Aorta (tissue), 5 donors: ENCODE measurements at regions of chr11 and their contacts with region 1.

Region 1: GRCh38 chr11:124086005-124086846 is 29.0 kb upstream of the VWA5A start:
- DNase-seq: no peak
- ATAC-seq: no peak
- H3K4me3 ChIP-seq: no peak overlapping the region
- H3K27ac ChIP-seq: no peak overlapping the region
- H3K4me1 ChIP-seq: no peaks in the 10 kb centered on the region
- H3K27me3 ChIP-seq: peaks cover 0 to 3% of the 10 kb centered on the region in 2 donors

Region 2: DNA sequence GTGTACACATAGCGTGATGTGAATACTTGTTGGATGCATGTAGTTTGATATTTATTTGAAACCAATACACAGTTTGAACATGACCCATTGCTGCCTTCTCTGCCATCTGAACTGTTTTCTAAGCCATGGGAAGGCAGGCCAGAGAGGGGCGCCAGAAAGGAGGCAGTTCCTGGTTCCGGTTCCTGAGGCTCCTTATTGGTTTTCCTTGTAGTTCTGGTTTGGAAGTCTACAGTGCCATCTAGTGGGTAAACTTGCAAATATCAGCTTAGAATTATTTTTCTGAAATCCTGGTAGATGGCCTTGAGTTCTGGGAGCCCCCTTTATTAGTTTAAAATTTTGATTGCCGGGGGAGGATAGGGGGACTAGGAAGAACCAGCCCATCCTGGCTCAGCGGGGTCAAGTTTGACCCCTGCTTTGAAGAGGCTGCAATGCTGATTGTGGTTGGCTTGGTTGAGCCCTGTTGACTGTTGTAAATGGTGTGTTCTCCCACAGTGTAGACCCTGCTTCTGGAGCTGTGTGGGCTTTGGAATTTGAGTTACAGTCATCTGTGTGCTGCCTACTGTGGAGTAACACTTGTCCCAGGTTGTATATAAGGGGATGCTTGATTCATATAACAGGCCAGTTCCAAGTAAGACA is 607.8 kb before region 1 on chr11:
- intact Hi-C with region 1: no loop called
- DNase-seq: peak in 1 of 2 donors; percentile 62
- ATAC-seq: peak; percentile 75
- H3K4me3 ChIP-seq: no peak overlapping the region
- H3K27ac ChIP-seq: no peak overlapping the region
- H3K4me1 ChIP-seq: no peaks in the 10 kb centered on the region
- H3K27me3 ChIP-seq: no peaks in the 10 kb centered on the region

Region 3: GRCh38 chr11:124219126-124219525 is 132.9 kb after region 1 on chr11:
- intact Hi-C with region 1: no loop called
- DNase-seq: no peak
- ATAC-seq: no peak
- H3K4me3 ChIP-seq: no peak overlapping the region
- H3K27ac ChIP-seq: no peak overlapping the region
- H3K4me1 ChIP-seq: no peaks in the 10 kb centered on the region
- H3K27me3 ChIP-seq: no peaks in the 10 kb centered on the region

Region 4: GRCh38 chr11:124329787-124330478 is 243.7 kb after region 1 on chr11:
- intact Hi-C with region 1: loop called in 1 of 2 experiments (anchors 10 kb)
- DNase-seq: no peak
- ATAC-seq: no peak
- H3K4me3 ChIP-seq: no peak overlapping the region
- H3K27ac ChIP-seq: no peak overlapping the region
- H3K4me1 ChIP-seq: no peaks in the 10 kb centered on the region
- H3K27me3 ChIP-seq: no peaks in the 10 kb centered on the region

Region 5: DNA sequence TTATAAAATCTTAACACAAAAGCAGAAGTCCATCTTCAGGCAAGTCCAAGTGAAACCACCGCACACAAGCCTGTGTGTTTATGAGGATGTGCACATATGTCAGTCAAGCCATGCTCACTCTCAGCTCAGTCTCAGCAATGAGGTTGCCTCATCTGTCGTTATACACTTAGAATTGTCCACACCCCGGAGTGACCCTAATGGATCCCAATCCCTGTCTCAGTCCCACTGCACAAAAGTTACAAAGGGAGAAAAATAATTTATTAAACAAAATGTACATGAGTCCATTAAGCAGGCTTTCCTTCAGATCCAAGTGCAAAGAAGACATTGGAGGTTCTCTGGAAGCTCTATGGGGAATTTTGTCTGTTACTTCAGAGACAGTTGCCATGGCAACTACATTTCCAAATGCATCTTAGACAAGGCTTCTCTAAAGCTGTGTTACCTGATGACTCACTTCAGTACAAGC is 432.8 kb after region 1 on chr11:
- intact Hi-C with region 1: no loop called
- DNase-seq: peak in 1 of 2 donors; percentile 42
- ATAC-seq: no peak
- H3K4me3 ChIP-seq: no peak overlapping the region
- H3K27ac ChIP-seq: no peak overlapping the region
- H3K4me1 ChIP-seq: no peaks in the 10 kb centered on the region
- H3K27me3 ChIP-seq: no peaks in the 10 kb centered on the region